ENCODE measurements at regions of chr14 and their contacts with region 1.

Region 1: GRCh38 chr14:106417224-106418049 is 891.1 kb downstream of the TMEM121 start:
- DNase-seq: peak; percentile 75
- CTCF ChIP-seq: peak; percentile 100

Region 2: DNA sequence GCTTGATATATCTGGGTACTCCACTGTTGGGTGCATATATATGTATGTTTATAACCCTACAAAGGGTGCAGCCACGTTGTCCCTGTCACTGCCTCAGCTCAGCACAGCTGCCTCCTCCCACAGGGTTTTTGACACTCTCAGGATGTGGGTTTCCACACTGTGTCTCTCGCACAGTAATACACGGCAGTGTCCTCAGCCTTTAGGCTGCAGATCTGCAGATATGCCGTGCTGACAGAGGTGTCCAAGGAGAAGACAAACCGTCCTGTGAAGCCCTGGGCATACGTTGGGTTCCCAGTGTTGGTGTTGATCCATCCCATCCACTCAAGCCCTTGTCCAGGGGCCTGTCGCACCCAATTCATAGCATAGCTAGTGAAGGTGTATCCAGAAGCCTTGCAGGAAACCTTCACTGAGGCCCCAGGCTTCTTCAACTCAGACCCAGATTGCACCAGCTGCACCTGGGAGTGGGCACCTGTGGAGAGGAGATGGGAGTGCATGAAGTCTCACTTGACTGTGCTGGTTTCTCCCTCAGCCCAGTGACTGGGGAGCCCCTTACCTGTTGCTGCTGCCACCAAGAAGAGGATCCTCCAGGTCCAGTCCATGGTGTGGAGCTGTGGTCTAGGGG is 392.3 kb before region 1 on chr14:
- CTCF ChIA-PET with region 1: no interaction called
- POLR2A ChIA-PET with region 1: no interaction called
- DNase-seq: no peak
- CTCF ChIP-seq: no peak

Region 3: GRCh38 chr14:106327234-106327633 is 90.2 kb before region 1 on chr14:
- CTCF ChIA-PET with region 1: interaction called, 14 read pairs
- POLR2A ChIA-PET with region 1: no interaction called
- DNase-seq: no peak
- CTCF ChIP-seq: no peak

Region 4: DNA sequence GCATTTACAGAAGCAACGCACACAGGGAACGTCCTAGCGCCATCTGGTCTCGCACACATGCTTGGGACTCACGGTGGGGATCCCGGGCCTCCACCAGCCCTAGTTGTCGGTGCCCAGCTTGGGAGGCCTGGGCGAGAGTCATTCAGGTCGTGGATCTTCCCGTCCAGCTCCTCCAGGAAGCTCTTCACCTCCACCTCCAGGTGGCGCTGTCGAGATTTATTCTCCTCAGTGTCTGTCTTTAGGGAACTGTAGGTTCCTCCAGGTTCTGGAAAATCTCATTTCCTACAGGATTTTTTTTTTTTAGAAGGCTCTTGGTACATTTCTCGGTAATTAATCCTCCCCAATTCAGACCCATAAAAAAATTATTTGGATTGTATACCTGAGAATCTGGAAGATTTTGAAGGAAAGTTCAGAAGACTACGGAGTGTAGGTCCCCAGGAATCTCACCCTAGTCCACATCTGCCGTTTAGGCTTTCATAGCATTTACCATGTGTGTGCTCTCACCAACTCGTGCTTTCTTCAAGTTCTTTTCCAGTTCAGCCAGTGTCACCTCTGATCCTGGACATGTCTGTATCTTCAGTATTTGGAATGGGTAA is 19.0 kb after region 1 on chr14:
- CTCF ChIA-PET with region 1: interaction called, 68 read pairs
- POLR2A ChIA-PET with region 1: no interaction called
- DNase-seq: peak; percentile 6
- CTCF ChIP-seq: peak; percentile 65

Region 5: DNA sequence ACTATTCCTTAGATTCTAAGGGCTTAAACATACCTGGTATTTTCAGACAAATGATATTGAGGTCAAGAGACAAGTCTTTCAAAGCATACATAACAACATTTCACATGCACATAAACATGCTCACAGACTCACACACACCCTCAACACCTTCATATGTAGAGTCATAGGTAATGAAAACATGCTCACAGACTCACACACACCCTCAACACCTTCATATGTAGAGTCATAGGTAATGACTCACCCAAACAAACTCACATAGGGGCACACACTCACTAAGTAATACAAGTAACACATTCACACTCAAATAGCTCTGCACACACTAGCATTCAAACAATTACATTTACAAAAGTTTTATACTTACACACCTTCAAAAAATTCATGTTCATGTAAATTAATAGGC is 84.5 kb after region 1 on chr14:
- CTCF ChIA-PET with region 1: interaction called, 33 read pairs
- POLR2A ChIA-PET with region 1: no interaction called
- DNase-seq: no peak
- CTCF ChIP-seq: no peak

Region 6: GRCh38 chr14:106556665-106557289 is 139.3 kb after region 1 on chr14:
- CTCF ChIA-PET with region 1: interaction called, 22 read pairs
- POLR2A ChIA-PET with region 1: no interaction called
- DNase-seq: peak; percentile 45
- CTCF ChIP-seq: peak; percentile 98

Region 7: GRCh38 chr14:106622200-106622745 is 204.8 kb after region 1 on chr14:
- CTCF ChIA-PET with region 1: interaction called, 10 read pairs
- POLR2A ChIA-PET with region 1: no interaction called
- DNase-seq: no peak
- CTCF ChIP-seq: no peak

Region 8: DNA sequence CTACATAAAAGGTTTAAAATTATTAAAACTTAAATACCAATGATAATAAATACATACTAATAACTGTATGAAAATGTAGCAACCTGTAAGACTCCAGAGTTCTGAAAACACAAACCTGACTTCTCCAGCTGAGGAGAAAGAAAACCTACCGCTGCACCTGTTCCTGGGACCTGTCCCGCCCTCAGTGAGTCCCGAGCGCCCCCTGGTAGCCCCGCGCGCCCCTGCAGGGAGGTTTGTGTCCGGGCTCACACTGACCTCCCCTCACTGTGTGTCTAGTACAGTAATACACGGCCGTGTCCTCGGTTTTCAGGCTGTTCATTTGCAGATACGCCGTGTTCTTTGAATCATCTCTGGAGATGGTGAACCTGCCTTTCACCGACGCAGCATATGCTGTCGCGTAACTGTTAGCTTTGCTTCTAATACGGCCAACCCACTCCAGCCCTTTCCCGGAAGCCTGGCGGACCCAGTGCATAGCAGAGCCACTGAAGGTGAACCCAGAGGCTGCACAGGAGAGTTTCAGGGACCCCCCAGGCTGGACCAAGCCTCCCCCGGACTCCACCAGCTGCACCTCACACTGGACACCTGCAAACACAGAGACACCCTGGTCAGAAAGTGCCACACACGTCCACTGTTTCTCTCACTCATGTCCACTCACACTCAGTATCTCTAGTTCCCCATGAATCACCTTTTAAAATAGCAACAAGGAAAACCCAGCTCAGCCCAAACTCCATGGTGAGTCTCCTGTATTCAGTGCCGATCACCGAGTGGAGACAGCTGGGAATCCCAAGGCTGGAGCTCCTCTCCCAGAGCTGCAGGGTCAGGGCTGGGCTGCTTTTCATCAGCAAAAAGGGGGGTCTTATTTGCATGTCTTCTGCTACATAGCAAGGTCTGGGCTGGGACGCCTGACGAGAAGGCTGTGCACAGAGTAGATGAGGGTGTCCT is 385.3 kb after region 1 on chr14:
- CTCF ChIA-PET with region 1: no interaction called
- POLR2A ChIA-PET with region 1: no interaction called
- DNase-seq: peak; percentile 26
- CTCF ChIP-seq: peak; percentile 35

Measured in GM10248 (cell line).